ENCODE measurements at regions of chr6 and their contacts with region 1.

Region 1: GRCh38 chr6:141398949-141399348 is 733.8 kb upstream of the GJE1 start:
- DNase-seq: no peak
- H3K4me3 Mint-ChIP-seq: no peak overlapping the region
- H3K27ac Mint-ChIP-seq: no peak overlapping the region
- H3K4me1 Mint-ChIP-seq: peaks cover 8% of the 10 kb centered on the region
- H3K27me3 Mint-ChIP-seq: peaks cover 1% of the 10 kb centered on the region

Region 2: DNA sequence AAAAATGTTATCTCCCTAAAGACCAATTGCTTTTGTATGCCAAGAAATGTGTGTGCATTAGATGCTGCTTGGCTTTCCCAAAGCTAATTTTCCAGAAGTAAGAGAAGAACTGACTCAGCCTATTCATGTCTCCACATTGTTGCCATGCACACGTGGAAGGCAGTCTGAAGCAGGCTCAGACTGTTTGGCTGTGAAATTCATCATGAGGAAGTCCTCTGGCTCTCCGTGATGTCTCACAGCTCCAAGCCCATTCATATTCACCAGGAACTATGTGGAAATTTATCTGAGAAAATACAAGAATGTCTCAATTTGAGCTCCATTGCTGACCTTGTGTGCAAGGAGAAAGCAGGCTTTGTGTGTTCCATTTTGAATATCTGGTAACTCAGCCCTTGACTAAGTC is 288.5 kb before region 1 on chr6:
- intact Hi-C with region 1: no loop called
- DNase-seq: no peak
- H3K4me3 Mint-ChIP-seq: no peak overlapping the region
- H3K27ac Mint-ChIP-seq: no peak overlapping the region
- H3K4me1 Mint-ChIP-seq: no peaks in the 10 kb centered on the region
- H3K27me3 Mint-ChIP-seq: no peaks in the 10 kb centered on the region

Region 3: GRCh38 chr6:141541581-141542324 is 142.8 kb after region 1 on chr6:
- intact Hi-C with region 1: loop called (anchors 5 kb)
- DNase-seq: no peak
- H3K4me3 Mint-ChIP-seq: no peak overlapping the region
- H3K27ac Mint-ChIP-seq: no peak overlapping the region
- H3K4me1 Mint-ChIP-seq: peaks cover 6% of the 10 kb centered on the region
- H3K27me3 Mint-ChIP-seq: peaks cover under 1% of the 10 kb centered on the region

Region 4: GRCh38 chr6:141562851-141563763 is 164.2 kb after region 1 on chr6:
- intact Hi-C with region 1: no loop called
- DNase-seq: peak; percentile 35
- H3K4me3 Mint-ChIP-seq: peak overlapping the region; percentile 51
- H3K27ac Mint-ChIP-seq: peak overlapping the region; percentile 2
- H3K4me1 Mint-ChIP-seq: peaks cover 19% of the 10 kb centered on the region
- H3K27me3 Mint-ChIP-seq: peaks cover 8% of the 10 kb centered on the region